ENCODE measurements at regions of chr15 and their contacts with region 1.

Region 1: GRCh38 chr15:70097337-70098169 is at the start of gene TLE3:
- DNase-seq: peak; percentile 98 to 100 (median 100)
- H3K4me3 ChIP-seq: peak within 1 kb of the TSS; percentile 65 to 92 (median 79)
- H3K27ac ChIP-seq: peak within 1 kb of the TSS; percentile 77 to 100 (median 96)
- H3K27me3 ChIP-seq: peaks cover 0 to 19% (median 0%) of the 10 kb centered on the region in 45 donors
- CTCF ChIP-seq: peak in 53 of 56 donors; percentile 19 to 66 (median 44)
- total RNA-seq, gene TLE3: 22.5 to 97.6 (median 43.5) TPM

Region 2: GRCh38 chr15:69475769-69476358 is 621.7 kb before region 1 on chr15:
- intact Hi-C with region 1: loop called in 1 of 2 experiments (anchors 10 kb)
- DNase-seq: peak; percentile 66 to 87 (median 82)
- H3K4me3 ChIP-seq: no peak overlapping the region
- H3K27ac ChIP-seq: no peak overlapping the region
- H3K27me3 ChIP-seq: no peaks in the 10 kb centered on the region
- CTCF ChIP-seq: peak; percentile 71 to 97 (median 93)

Region 3: GRCh38 chr15:69893863-69894262 is 203.7 kb before region 1 on chr15:
- intact Hi-C with region 1: loop called in 1 of 2 experiments (anchors 5 kb)
- DNase-seq: peak; percentile 5 to 83 (median 74)
- H3K4me3 ChIP-seq: no peak overlapping the region
- H3K27ac ChIP-seq: peak overlapping the region in 2 of 59 donors; percentile 24 to 37
- H3K27me3 ChIP-seq: peaks cover 0 to 5% (median 0%) of the 10 kb centered on the region in 45 donors
- CTCF ChIP-seq: peak in 5 of 56 donors; percentile 4 to 40 (median 24)

Region 4: DNA sequence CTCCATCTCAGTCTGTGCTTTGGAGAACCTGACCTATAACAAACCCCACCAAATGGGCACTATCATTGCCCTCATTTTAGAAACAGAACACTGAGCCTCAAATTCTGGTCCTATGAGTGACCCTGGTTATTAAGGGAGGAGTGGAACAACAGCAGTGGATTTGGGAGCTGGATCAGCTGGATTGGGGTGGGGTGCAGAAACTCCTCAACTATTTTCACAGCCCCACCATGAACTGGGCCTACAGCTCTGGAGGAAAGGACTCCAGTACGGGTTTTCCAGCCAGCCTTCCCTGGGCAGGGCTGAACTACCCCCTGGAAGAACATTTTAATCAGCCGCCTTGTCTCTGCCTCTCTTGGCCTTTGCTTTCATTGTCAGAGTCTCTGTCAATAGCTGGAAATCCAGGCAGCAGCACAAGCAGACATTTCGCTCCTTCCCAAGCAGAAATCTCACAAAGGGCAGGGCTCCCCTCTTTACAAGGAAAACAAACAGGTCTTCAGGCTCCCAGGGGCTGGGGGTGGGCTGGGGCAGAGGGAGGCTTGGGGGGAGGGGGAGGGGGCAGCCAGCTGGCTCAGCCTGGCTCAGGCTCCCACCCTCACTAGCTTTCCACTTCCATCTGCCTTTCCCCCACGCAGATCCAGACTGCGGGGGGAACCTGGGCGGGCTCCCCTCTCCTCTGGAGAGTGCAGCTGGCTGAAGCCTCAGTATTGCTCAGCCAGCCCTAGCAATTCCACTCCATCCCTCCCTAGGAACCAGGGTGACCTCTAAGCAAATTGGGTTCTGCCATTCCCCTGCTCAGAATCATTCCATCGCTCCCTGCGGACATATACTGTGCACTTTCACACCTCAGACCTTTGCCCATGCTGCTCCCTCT is 13.9 kb after region 1 on chr15:
- intact Hi-C with region 1: loop called in 1 of 2 experiments (anchors 1 kb)
- DNase-seq: peak in 7 of 10 donors; percentile 63 to 78 (median 75)
- H3K4me3 ChIP-seq: peak overlapping the region in 39 of 59 donors; percentile 1 to 47 (median 18)
- H3K27ac ChIP-seq: peak overlapping the region in 56 of 59 donors; percentile 48 to 90 (median 76)
- H3K27me3 ChIP-seq: peaks cover 0 to 2% (median 0%) of the 10 kb centered on the region in 45 donors
- CTCF ChIP-seq: peak in 3 of 56 donors; percentile 4 to 16 (median 12)

Region 5: GRCh38 chr15:70466895-70467529 is 369.5 kb after region 1 on chr15:
- intact Hi-C with region 1: loop called in 1 of 2 experiments (anchors 5 kb)
- DNase-seq: peak in 8 of 10 donors; percentile 45 to 76 (median 60)
- H3K4me3 ChIP-seq: no peak overlapping the region
- H3K27ac ChIP-seq: no peak overlapping the region
- H3K27me3 ChIP-seq: peaks cover 0 to 28% (median 0%) of the 10 kb centered on the region in 45 donors
- CTCF ChIP-seq: peak; percentile 24 to 75 (median 58)